ENCODE measurements at regions of chr2 and their contacts with region 1.

Region 1: GRCh38 chr2:61529944-61530735 is 8.0 kb downstream of the XPO1 start:
- DNase-seq: no peak
- ATAC-seq: peak in 1 of 2 donors; percentile 30
- H3K4me3 Mint-ChIP-seq: peak overlapping the region in 7 of 10 donors; percentile 4 to 56 (median 42)
- H3K27ac Mint-ChIP-seq: peak overlapping the region in 9 of 10 donors; percentile 8 to 80 (median 51)
- H3K4me1 Mint-ChIP-seq: peaks cover 12 to 86% (median 52%) of the 10 kb centered on the region in 4 donors
- H3K27me3 Mint-ChIP-seq: no peaks in the 10 kb centered on the region

Region 2: GRCh38 chr2:61288070-61288841 is 241.9 kb before region 1 on chr2:
- POLR2A ChIA-PET with region 1: no interaction called
- DNase-seq: no peak
- ATAC-seq: no peak
- H3K4me3 Mint-ChIP-seq: no peak overlapping the region
- H3K27ac Mint-ChIP-seq: peak overlapping the region in 6 of 10 donors; percentile 8 to 60 (median 26)
- H3K4me1 Mint-ChIP-seq: peaks cover 0 to 6% (median 2%) of the 10 kb centered on the region in 4 donors
- H3K27me3 Mint-ChIP-seq: no peaks in the 10 kb centered on the region

Region 3: GRCh38 chr2:61405813-61406212 is 124.3 kb before region 1 on chr2:
- POLR2A ChIA-PET with region 1: no interaction called
- DNase-seq: no peak
- ATAC-seq: no peak
- H3K4me3 Mint-ChIP-seq: no peak overlapping the region
- H3K27ac Mint-ChIP-seq: peak overlapping the region in 2 of 10 donors; percentile 0 to 34
- H3K4me1 Mint-ChIP-seq: peaks cover 4 to 19% (median 12%) of the 10 kb centered on the region in 4 donors
- H3K27me3 Mint-ChIP-seq: no peaks in the 10 kb centered on the region

Region 4: GRCh38 chr2:61512768-61513398 is 17.3 kb before region 1 on chr2:
- POLR2A ChIA-PET with region 1: no interaction called
- DNase-seq: no peak
- ATAC-seq: no peak
- H3K4me3 Mint-ChIP-seq: no peak overlapping the region
- H3K27ac Mint-ChIP-seq: peak overlapping the region in 8 of 10 donors; percentile 34 to 86 (median 67)
- H3K4me1 Mint-ChIP-seq: peaks cover 11 to 33% (median 19%) of the 10 kb centered on the region in 4 donors
- H3K27me3 Mint-ChIP-seq: no peaks in the 10 kb centered on the region

Region 5: DNA sequence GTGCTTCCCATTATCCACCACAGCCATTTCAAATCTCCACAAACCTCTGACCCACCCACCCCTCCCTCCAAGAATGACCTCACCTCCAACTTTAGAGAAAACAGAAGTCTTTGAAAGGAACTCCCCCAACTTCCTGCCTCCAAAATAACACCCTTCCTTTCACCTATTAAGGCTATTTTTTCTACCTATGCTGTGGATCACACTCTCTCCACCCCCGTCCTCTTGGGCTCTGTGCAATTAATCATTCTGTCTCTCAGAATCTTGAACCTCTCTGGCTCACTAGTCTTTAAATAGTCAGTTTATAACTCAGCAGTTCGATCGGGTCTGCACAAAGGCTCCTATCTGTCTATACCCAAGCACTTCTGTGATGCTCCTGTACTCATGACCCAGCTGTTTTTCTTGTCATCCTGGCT is 45.3 kb after region 1 on chr2:
- POLR2A ChIA-PET with region 1: interaction called, 10 read pairs
- DNase-seq: peak in 1 of 10 donors; percentile 4
- ATAC-seq: peak; percentile 29 to 37
- H3K4me3 Mint-ChIP-seq: peak overlapping the region in 5 of 10 donors; percentile 34 to 56 (median 48)
- H3K27ac Mint-ChIP-seq: peak overlapping the region in 9 of 10 donors; percentile 10 to 87 (median 74)
- H3K4me1 Mint-ChIP-seq: peaks cover 8 to 11% (median 10%) of the 10 kb centered on the region in 4 donors
- H3K27me3 Mint-ChIP-seq: peaks cover 0 to 1% (median 0%) of the 10 kb centered on the region in 5 donors